ENCODE measurements at regions of chr17 and their contacts with region 1.

Region 1: GRCh38 chr17:60630352-60630751 is 30.4 kb downstream of the PPM1D start:
- DNase-seq: peak in 3 of 7 donors; percentile 40 to 42 (median 42)
- H3K4me3 ChIP-seq: no peak overlapping the region
- H3K27ac ChIP-seq: peak overlapping the region in 2 of 5 donors; percentile 44 to 47
- H3K4me1 ChIP-seq: peaks cover 0 to 19% of the 10 kb centered on the region in 2 donors
- H3K27me3 ChIP-seq: no peaks in the 10 kb centered on the region
- CTCF ChIP-seq: no peak
- POLR2A ChIP-seq: no peak

Region 2: GRCh38 chr17:60577147-60577915 is 53.0 kb before region 1 on chr17:
- intact Hi-C with region 1: loop called in 1 of 2 experiments (anchors 10 kb)
- DNase-seq: peak; percentile 29 to 65 (median 56)
- H3K4me3 ChIP-seq: peak overlapping the region in 2 of 4 donors; percentile 0 to 20
- H3K27ac ChIP-seq: peak overlapping the region; percentile 14 to 82 (median 54)
- H3K4me1 ChIP-seq: peaks cover 8 to 32% of the 10 kb centered on the region in 2 donors
- H3K27me3 ChIP-seq: no peaks in the 10 kb centered on the region
- CTCF ChIP-seq: peak in 2 of 6 experiments; percentile 19 to 29
- POLR2A ChIP-seq: no peak

Region 3: DNA sequence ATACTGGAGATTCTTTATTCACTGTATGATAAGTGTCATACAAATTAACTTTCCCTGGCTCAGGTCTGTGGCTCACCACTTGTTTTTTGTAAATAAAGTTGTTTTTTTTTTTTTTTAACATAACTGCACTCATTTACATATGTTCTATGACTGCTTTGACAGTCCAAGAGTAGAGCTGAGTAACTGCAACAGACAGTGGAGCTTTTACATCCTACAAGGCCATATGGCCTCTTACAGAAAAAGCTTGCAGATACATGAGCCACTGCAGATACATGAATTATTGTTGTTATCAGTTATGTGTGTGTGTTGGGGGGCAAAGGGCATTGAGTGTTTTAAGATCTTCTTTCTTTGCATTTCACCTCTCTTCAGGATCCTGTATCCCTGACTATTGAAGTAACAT is 359.0 kb after region 1 on chr17:
- intact Hi-C with region 1: no loop called
- DNase-seq: no peak
- H3K4me3 ChIP-seq: no peak overlapping the region
- H3K27ac ChIP-seq: no peak overlapping the region
- H3K4me1 ChIP-seq: no peaks in the 10 kb centered on the region
- H3K27me3 ChIP-seq: no peaks in the 10 kb centered on the region
- CTCF ChIP-seq: no peak
- POLR2A ChIP-seq: no peak

Measured in adrenal gland (tissue), 19 donors.